IMR-90 (cell line): ENCODE measurements at regions of chr9 and their contacts with region 1.

Region 1: DNA sequence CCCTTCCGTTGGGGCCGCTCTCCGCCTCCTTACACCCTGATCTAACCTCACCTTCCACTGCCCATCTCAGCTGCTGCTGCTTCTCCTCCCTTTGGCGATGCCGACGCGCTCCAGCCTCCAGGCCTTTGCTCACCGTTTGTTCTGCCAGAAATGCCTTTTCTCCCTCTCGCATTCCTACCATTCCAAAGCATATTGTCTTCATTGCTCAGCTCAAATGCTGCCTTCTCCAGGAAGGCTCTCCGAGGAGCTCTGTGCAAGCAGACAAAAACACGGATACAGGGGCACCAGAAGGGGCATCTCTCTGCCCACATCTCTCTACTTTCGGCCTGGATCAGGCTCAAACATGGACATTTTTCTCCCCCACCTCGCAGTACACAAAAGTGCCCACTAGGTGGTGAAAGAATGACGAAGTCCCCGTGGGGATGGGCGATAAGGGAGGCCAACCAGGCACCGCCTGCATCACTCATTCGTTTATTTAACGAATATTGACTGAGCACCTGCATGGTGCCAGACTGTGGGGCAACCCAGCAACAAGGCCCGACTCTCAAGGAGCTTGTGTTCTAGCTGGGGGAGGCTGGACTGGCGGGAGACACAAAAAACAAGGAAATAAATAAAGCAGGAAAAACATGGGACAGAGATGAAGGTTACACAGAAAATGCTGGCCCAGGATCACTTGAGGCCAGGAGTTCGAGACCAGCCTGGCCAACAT is 7.3 kb upstream of the GRHPR start:
- DNase-seq: peak; percentile 73
- ATAC-seq: peak; percentile 85
- H3K4me3 ChIP-seq: no peak overlapping the region
- H3K27ac ChIP-seq: peak overlapping the region; percentile 2; the same call in 1 of the 2 replicates
- H3K4me1 ChIP-seq: peaks cover 2% of the 10 kb centered on the region; the same call in 1 of the 2 replicates
- H3K27me3 ChIP-seq: no peaks in the 10 kb centered on the region
- CTCF ChIP-seq: peak; percentile 76
- POLR2A ChIP-seq: no peak
- RAD21 ChIP-seq: peak; percentile 57

Region 2: GRCh38 chr9:37464426-37465248 is 49.5 kb after region 1 on chr9:
- CTCF ChIA-PET with region 1: no interaction called
- POLR2A ChIA-PET with region 1: no interaction called
- dilution Hi-C with region 1: no loop called
- in situ Hi-C with region 1: no loop called
- intact Hi-C with region 1: loop called (anchors 5 kb)
- DNase-seq: peak; percentile 63
- ATAC-seq: peak; percentile 50
- H3K4me3 ChIP-seq: peak overlapping the region; percentile 76
- H3K27ac ChIP-seq: peak overlapping the region; percentile 81
- H3K4me1 ChIP-seq: no peaks in the 10 kb centered on the region; the same call in none of the 2 replicates
- H3K27me3 ChIP-seq: no peaks in the 10 kb centered on the region
- CTCF ChIP-seq: no peak
- POLR2A ChIP-seq: peak; percentile 79
- RAD21 ChIP-seq: no peak